AG04450 (cell line): ENCODE measurements at regions of chr11 and their contacts with region 1.

Region 1: GRCh38 chr11:57324886-57325734 is at the start of gene TNKS1BP1:
- DNase-seq: peak; percentile 94
- H3K4me3 ChIP-seq: peak within 1 kb of the TSS; percentile 83
- H3K27ac ChIP-seq: peak within 1 kb of the TSS; percentile 99
- H3K27me3 ChIP-seq: no peaks in the 10 kb centered on the region
- CTCF ChIP-seq: no peak
- polyA plus RNA-seq, gene TNKS1BP1: 59.4 and 63.8 TPM in 2 replicates

Region 2: GRCh38 chr11:56545531-56545930 is 779.6 kb before region 1 on chr11:
- CTCF ChIA-PET with region 1: no interaction called
- POLR2A ChIA-PET with region 1: no interaction called
- DNase-seq: no peak
- H3K4me3 ChIP-seq: no peak overlapping the region
- H3K27ac ChIP-seq: no peak overlapping the region
- H3K27me3 ChIP-seq: no peaks in the 10 kb centered on the region
- CTCF ChIP-seq: no peak

Region 3: GRCh38 chr11:57294605-57295131 is 30.4 kb before region 1 on chr11:
- CTCF ChIA-PET with region 1: no interaction called
- POLR2A ChIA-PET with region 1: interaction called, 10 read pairs
- DNase-seq: no peak
- H3K4me3 ChIP-seq: no peak overlapping the region
- H3K27ac ChIP-seq: peak overlapping the region; percentile 25
- H3K27me3 ChIP-seq: no peaks in the 10 kb centered on the region
- CTCF ChIP-seq: no peak

Region 4: DNA sequence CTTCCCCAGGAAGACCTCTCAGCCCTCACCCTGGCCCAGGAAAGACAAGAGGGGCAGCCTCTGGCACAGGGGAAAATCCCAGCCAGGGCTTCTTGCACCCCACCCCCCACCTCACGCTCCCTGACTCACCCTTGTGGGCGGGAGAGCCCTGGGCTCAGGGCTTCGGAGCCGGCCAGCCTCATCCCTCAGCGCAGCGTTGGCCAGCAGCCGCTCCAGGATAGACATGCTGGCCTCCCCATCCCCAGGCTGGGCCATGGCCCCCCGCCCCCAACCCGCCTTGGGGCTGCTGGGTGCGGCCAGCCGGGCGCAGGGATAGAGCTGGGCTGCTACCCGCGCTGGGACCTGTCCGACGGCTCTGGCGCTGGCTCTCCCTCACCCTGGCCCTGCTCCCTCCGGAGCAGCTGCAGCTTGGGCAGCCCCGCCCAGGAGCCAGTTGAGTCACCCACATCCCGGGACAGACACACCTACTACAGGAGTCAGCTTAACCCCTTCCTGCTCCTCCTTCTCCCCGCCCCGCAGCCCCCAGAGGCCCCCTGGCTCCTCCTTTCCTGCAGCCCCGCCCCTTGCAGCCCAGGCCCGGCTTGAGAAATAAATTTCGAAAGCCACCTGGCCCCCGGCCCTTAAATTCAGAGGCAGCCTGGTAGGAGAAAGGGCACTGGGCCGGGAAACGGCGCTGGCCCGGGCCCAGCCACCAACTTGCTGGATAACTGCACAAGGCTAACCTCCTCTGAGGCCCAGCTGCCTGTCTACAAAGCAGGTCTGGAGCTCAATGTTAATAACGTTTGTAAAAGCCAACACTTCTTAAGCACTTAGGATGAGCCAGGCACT is 13.8 kb before region 1 on chr11:
- CTCF ChIA-PET with region 1: interaction called, 3 read pairs
- POLR2A ChIA-PET with region 1: interaction called, 44 read pairs
- DNase-seq: peak; percentile 94
- H3K4me3 ChIP-seq: peak overlapping the region; percentile 67
- H3K27ac ChIP-seq: peak overlapping the region; percentile 88
- H3K27me3 ChIP-seq: no peaks in the 10 kb centered on the region
- CTCF ChIP-seq: no peak

Region 5: GRCh38 chr11:57335343-57336110 is 10.4 kb after region 1 on chr11 and contains the start of gene SSRP1:
- CTCF ChIA-PET with region 1: interaction called, 5 read pairs
- POLR2A ChIA-PET with region 1: interaction called, 14 read pairs
- DNase-seq: no peak
- H3K4me3 ChIP-seq: peak within 1 kb of the TSS; percentile 78
- H3K27ac ChIP-seq: peak within 1 kb of the TSS; percentile 39
- H3K27me3 ChIP-seq: peaks cover 17% of the 10 kb centered on the region
- CTCF ChIP-seq: no peak
- polyA plus RNA-seq, gene SSRP1: 111 and 113 TPM in 2 replicates

Region 6: GRCh38 chr11:57358543-57358961 is 33.4 kb after region 1 on chr11:
- CTCF ChIA-PET with region 1: no interaction called
- POLR2A ChIA-PET with region 1: no interaction called
- DNase-seq: no peak
- H3K4me3 ChIP-seq: no peak overlapping the region
- H3K27ac ChIP-seq: no peak overlapping the region
- H3K27me3 ChIP-seq: peaks cover 37% of the 10 kb centered on the region
- CTCF ChIP-seq: no peak